GM10248 (cell line): ENCODE measurements at regions of chr5 and their contacts with region 1.

Region 1: DNA sequence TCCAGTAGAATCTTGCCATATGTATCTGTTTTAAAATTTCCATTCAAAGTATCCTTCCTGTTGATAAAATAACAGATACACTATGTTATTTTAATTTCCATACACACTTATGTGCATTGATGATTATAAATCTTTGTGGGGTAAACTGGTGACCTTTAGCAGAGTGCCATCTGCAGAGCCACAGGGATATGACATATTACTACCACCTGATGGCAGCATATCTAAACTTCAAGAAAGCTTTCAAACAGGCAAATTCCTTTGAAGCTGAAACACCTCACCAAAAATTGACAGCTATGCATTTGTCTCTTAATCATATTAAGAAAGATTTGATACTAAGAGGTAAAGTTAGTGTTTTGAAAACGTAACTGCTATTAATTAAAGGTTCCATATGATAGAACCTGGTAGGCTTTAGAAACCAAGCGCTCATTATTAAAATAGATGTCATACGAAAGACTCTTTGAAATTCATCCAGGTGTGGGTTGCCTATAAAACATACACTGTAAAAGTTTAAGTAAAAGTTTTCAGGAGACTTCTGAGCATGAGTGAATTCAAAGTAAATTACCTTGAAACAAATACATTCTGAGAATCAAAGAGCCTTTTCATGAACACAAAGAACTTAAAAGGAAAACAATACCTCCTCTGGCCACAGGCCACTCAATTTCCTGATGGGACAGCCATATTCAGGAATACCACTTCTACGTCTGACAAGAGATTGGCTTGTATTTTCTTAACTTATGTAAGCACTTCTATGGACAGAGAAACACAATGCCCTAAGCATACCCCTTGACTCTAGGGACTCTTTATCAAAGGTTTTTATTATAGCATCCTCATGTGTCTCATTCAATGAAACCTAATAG is 93.3 kb downstream of the KIAA0825 start:
- DNase-seq: peak; percentile 30
- CTCF ChIP-seq: peak; percentile 71

Region 2: GRCh38 chr5:94693043-94693822 is 168.2 kb after region 1 on chr5:
- CTCF ChIA-PET with region 1: interaction called, 10 read pairs
- POLR2A ChIA-PET with region 1: no interaction called
- DNase-seq: no peak
- CTCF ChIP-seq: peak; percentile 45

Region 3: DNA sequence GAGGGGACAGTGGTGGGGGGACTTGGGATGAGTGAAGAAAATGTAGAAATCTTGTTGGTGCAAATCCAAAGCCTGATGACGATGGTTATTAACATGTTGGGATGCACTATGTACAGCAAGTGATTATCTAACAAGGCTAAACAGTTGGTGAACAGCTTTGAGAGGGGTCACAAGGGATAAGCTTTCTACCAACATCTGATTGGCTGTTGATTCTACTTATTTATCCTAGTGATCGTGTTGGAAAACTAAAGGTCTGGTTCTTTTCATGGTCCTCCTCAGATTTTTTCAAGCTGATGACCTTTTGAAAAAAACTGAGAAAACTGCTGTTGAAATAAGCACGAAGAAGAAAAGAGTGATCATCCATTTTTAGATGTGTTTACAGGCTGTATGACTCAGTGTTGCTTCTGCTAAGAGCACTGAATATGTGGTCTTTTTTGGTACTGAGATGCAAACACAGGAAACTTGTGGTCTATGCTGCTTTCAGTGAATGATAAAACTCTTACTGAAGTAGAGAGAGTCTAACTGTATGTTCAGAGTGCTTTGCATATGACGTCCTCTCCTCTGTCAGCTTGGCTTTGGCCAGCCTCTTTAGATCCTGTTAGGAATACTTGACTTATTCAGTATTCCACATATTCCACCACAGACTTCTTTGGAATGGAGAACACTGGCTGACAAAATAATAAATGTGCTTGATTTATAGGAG is 268.2 kb after region 1 on chr5:
- CTCF ChIA-PET with region 1: no interaction called
- POLR2A ChIA-PET with region 1: no interaction called
- DNase-seq: peak; percentile 83
- CTCF ChIP-seq: no peak